Activated naive CD4-positive, alpha-beta T cell treated with anti-CD3 and anti-CD28 coated beads for 36 hours (primary cell): ENCODE measurements at regions of chr13 and their contacts with region 1.

Region 1: DNA sequence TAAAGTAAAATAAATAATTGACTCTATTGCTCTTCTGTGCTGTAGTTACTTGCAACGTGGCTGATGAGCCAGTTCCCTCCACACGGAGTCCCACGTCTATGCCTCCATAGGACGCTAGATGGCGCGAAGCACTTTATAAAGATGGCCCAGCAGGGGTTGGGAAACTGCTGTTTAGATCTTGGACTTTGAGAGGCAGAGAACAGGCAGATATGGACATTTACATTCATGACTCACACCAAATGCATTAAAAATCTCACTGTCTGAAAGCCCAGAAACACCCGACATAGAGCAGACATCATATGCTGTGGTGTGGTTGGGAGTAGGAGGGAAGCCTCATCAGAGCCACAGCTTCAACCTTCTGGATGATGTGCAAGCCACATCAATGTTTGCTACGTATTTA is 643.1 kb upstream of the ARGLU1 start:
- DNase-seq: peak; percentile 71
- H3K4me3 Mint-ChIP-seq: no peak overlapping the region
- H3K27ac Mint-ChIP-seq: no peak overlapping the region
- H3K4me1 Mint-ChIP-seq: no peaks in the 10 kb centered on the region
- H3K27me3 Mint-ChIP-seq: peaks cover 11% of the 10 kb centered on the region

Region 2: DNA sequence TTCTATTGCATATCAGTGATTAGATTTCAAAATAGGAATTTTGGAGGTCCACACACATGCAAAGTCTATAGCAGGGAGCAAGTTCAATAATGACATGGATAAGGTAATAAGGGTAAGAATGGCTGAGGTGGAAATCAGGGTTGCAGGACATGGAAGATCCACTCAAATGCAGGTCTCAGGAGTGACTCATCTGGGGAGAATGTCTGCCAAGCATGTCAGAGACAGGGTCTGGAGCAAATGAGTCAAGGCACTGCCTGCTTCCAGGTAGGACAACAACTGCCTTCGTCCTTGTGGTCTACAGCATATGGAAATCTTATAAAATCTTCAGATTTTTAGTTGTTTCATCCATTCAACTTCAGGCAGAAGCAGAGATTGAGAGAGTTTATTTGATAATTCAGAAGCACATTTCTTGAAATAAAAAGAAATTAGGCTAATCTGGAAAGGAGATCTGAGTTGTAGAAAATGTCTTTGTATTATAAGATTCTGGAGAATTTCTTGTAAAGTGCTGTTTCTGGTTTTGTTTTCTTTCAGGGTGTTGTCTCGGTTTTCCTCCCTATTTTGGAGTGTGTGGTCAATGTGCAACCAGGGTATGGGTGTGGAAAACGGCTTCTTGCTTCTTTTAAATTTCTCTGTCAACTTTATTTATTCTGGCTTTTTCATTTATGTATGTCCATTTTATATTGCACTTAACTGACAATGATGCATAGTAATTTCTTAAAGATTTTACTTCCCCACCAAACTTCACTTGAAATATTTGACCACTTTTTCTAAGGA is 255.4 kb after region 1 on chr13:
- CTCF ChIA-PET with region 1: no interaction called
- intact Hi-C with region 1: no loop called
- DNase-seq: no peak
- H3K4me3 Mint-ChIP-seq: no peak overlapping the region
- H3K27ac Mint-ChIP-seq: no peak overlapping the region
- H3K4me1 Mint-ChIP-seq: no peaks in the 10 kb centered on the region
- H3K27me3 Mint-ChIP-seq: no peaks in the 10 kb centered on the region

Region 3: GRCh38 chr13:107650081-107650701 is 439.1 kb after region 1 on chr13:
- CTCF ChIA-PET with region 1: no interaction called
- intact Hi-C with region 1: loop called (anchors 1 kb)
- DNase-seq: peak; percentile 33
- H3K4me3 Mint-ChIP-seq: no peak overlapping the region
- H3K27ac Mint-ChIP-seq: no peak overlapping the region
- H3K4me1 Mint-ChIP-seq: no peaks in the 10 kb centered on the region
- H3K27me3 Mint-ChIP-seq: peaks cover 2% of the 10 kb centered on the region

Region 4: DNA sequence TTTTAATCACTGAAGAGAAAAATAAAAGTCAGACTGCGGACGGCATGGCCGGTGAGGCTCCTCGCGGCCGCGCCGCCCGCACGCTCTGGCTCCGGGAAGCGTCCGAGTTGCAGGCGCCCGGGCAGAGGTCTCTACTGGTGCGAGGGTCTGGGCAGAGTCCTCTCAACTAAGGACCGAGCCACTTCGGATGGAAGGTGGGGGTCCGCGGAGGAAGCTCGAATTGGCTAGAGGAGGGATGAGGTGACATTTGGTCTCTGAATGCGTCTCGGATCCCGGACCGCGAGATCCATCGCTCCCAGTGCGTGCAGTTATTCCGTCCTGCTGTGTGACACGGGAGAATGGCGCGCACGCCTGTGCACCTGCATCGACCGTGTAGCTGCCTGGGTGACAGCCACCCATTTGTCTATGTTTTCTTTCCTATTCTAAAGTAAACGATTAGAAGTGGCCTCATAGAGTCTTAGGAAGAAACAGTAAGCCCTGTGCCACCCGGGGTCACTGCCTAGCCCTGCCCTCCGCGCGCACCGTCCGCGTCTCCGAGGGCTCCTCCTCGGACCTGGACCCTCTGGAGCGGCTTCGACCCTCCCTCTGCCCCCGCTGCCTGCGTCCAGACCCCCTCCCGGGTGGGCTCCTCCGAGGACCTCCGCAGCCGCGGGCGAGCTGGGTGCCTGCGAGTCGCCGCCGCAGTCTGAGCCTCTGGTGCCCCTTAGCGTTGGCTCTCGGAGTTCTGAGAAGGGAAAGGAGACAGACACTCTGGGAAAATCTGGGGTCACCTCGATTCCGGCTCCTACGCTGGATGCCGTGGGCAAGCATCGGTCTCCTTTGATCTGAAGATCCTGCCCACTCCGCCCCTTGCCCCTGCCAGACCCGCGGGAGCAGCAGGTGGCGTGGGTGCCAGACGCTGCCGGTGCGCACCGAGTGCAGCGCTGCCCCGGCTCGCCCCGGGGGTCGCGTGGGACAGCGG is 656.9 kb after region 1 on chr13:
- CTCF ChIA-PET with region 1: no interaction called
- intact Hi-C with region 1: loop called (anchors 5 kb)
- DNase-seq: peak; percentile 16
- H3K4me3 Mint-ChIP-seq: peak overlapping the region; percentile 61
- H3K27ac Mint-ChIP-seq: no peak overlapping the region
- H3K4me1 Mint-ChIP-seq: peaks cover 14% of the 10 kb centered on the region
- H3K27me3 Mint-ChIP-seq: peaks cover 49% of the 10 kb centered on the region

Region 5: DNA sequence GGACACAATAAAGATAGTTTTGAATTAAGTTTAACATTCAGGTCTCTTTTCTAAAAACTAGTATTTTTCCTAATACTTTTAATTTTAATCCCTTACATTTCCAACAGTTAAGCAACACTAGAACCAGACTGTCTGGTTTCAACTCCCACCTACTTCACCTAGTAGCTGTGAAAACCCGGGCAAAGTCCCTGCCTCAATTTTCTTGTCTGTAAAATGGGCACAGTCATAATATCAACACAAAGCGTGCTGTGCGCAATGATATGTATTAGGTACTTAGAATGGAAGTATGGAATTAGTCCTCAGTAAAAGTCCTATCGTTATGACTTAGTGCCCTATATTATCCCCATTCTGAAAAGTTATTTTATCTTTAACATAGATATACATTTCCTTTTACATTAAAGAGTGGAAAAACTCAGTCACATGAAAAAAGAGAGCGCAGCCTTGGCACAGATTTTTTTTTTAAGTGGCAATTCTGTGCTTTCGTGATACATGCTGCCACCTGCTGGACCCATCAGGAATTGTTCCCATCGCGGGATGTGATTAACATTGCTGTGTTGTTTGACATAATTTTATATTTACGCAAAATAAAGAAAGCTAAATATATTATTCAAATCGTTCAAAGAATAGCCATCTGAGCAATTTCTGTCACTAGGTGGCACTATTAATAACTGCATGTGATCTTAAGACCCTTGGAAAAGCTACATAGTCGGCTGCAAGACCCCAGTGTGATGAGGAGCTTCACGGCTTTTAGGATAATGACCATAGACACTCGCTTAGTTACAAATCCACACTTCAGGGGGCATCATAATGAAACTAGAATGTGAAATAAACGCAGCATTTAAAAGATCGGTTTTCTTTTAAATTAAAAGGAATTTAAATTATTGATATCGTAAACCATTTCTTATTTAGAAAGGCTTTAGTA is 944.4 kb after region 1 on chr13:
- CTCF ChIA-PET with region 1: interaction called, 20 read pairs
- intact Hi-C with region 1: loop called (anchors 1 kb)
- DNase-seq: peak; percentile 74
- H3K4me3 Mint-ChIP-seq: no peak overlapping the region
- H3K27ac Mint-ChIP-seq: no peak overlapping the region
- H3K4me1 Mint-ChIP-seq: no peaks in the 10 kb centered on the region
- H3K27me3 Mint-ChIP-seq: peaks cover 13% of the 10 kb centered on the region